ENCODE measurements at regions of chr14 and their contacts with region 1.

Region 1: DNA sequence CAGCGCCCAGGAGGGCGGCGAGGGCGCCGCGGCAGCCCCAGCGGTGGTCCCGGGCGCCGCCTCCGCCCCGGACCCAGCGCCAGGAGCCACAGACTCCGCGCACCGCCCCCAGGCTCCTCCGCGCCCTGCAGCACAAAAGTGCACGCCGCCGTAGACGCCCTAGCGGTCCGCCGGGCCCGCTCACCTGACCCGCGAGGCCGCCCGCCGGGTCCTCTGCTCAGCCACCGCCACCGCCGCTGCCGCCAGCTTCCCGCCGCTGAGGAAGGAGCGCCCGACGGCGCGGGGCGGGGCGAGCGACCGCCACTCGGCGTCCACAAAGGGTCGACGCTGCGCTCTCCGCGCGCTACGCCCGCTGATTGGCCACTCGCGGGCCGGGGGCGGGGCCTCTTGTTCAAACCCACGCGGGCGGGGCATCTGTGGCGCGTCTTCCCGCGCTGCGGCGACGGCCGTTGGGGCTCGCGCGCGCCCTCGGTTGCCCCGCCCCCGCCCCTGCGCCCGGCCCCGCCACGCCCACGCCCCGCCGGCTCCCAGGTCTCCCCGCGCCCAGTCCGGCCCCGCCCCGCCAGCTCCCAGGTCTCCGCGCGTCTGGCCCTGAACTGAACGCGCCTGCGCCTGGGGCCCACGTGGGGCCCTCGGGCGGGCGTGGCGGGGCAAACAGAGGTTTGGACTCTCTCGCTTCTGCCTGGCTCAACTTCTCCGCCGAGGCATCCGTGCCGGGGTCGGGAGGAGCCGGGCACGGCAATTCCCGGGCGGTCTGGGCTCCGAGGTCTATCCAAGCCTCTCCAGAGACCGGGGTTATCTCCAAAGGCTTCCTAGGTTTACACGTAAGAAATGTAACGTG is at the start of gene CDCA4:
- DNase-seq: peak; percentile 97
- H3K4me3 Mint-ChIP-seq: peak within 1 kb of the TSS; percentile 93
- H3K27ac Mint-ChIP-seq: peak within 1 kb of the TSS; percentile 81
- H3K4me1 Mint-ChIP-seq: peaks cover 60% of the 10 kb centered on the region
- H3K27me3 Mint-ChIP-seq: no peaks in the 10 kb centered on the region
- total RNA-seq, gene CDCA4: 47.7 and 49.6 TPM in 2 replicates

Region 2: GRCh38 chr14:104752735-104753531 is 268.1 kb before region 1 on chr14 and contains the start of gene SIVA1:
- intact Hi-C with region 1: loop called (anchors 10 kb)
- DNase-seq: peak; percentile 100
- H3K4me3 Mint-ChIP-seq: peak within 1 kb of the TSS; percentile 88
- H3K27ac Mint-ChIP-seq: peak within 1 kb of the TSS; percentile 89
- H3K4me1 Mint-ChIP-seq: peaks cover 22% of the 10 kb centered on the region
- H3K27me3 Mint-ChIP-seq: no peaks in the 10 kb centered on the region
- total RNA-seq, gene SIVA1: 96.0 and 104 TPM in 2 replicates

Region 3: GRCh38 chr14:104913435-104913834 is 107.6 kb before region 1 on chr14:
- intact Hi-C with region 1: no loop called
- DNase-seq: no peak
- H3K4me3 Mint-ChIP-seq: no peak overlapping the region
- H3K27ac Mint-ChIP-seq: no peak overlapping the region
- H3K4me1 Mint-ChIP-seq: no peaks in the 10 kb centered on the region
- H3K27me3 Mint-ChIP-seq: peaks cover 17% of the 10 kb centered on the region

Region 4: DNA sequence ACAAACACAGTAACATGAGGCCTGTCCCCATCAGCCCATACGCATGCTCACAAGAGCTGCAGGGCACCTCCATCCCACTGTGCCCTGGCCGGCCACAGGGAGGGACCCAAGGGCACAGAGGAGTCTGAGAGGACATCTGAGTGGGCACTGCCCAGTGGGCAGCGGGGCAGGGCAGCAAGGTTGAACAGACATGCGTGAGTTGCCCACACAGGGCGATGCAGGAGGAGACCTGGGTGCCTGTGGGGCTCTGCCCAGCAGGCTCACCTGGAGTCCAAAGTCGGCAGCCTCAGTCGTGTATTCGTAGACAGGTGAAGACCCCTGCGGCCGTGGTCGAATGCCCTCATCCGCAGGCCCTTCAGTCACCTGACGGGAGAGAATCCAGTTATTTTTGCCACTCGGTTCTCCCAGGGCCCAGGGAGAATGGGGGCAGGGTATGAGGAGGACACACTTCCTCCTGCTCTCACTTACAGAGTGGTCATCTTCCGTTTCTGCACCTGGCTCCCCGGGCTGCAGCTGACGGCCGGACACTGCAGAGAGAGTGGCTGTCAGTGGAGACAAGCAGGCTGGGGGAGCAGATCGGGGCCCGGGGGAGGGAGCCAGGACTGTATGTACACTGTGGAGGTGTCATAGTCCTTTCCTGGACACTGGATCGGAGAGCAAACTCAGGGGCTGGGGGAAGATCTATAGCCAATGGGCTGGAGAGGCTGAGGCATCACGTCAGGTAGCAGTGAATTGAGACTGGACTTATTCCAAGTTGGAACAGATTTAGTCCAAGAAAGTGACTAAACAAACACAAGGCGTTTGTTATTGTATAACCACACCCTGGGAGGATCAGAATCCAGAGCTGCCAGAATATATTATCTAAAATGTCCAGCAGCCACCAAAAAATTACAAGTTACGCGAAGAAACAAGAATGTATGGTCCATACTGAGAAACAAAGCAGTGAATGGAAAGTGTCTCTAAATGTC is 63.6 kb before region 1 on chr14:
- intact Hi-C with region 1: no loop called
- DNase-seq: no peak
- H3K4me3 Mint-ChIP-seq: no peak overlapping the region
- H3K27ac Mint-ChIP-seq: no peak overlapping the region
- H3K4me1 Mint-ChIP-seq: no peaks in the 10 kb centered on the region
- H3K27me3 Mint-ChIP-seq: peaks cover 12% of the 10 kb centered on the region

Region 5: GRCh38 chr14:104973300-104974145 is 47.5 kb before region 1 on chr14:
- intact Hi-C with region 1: no loop called
- DNase-seq: no peak
- H3K4me3 Mint-ChIP-seq: no peak overlapping the region
- H3K27ac Mint-ChIP-seq: no peak overlapping the region
- H3K4me1 Mint-ChIP-seq: peaks cover 5% of the 10 kb centered on the region
- H3K27me3 Mint-ChIP-seq: peaks cover 10% of the 10 kb centered on the region

Region 6: GRCh38 chr14:104985675-104986525 is 35.1 kb before region 1 on chr14 and contains the start of gene CLBA1:
- intact Hi-C with region 1: loop called (anchors 2 kb)
- DNase-seq: peak; percentile 86
- H3K4me3 Mint-ChIP-seq: peak within 1 kb of the TSS; percentile 61
- H3K27ac Mint-ChIP-seq: peak within 1 kb of the TSS; percentile 49
- H3K4me1 Mint-ChIP-seq: peaks cover 4% of the 10 kb centered on the region
- H3K27me3 Mint-ChIP-seq: peaks cover 3% of the 10 kb centered on the region
- total RNA-seq, gene CLBA1: 0.94 and 1.4 TPM in 2 replicates

Region 7: GRCh38 chr14:105045710-105046326 is 24.8 kb after region 1 on chr14:
- intact Hi-C with region 1: loop called (anchors 1 kb)
- DNase-seq: peak; percentile 86
- H3K4me3 Mint-ChIP-seq: no peak overlapping the region
- H3K27ac Mint-ChIP-seq: no peak overlapping the region
- H3K4me1 Mint-ChIP-seq: peaks cover 11% of the 10 kb centered on the region
- H3K27me3 Mint-ChIP-seq: no peaks in the 10 kb centered on the region

Region 8: DNA sequence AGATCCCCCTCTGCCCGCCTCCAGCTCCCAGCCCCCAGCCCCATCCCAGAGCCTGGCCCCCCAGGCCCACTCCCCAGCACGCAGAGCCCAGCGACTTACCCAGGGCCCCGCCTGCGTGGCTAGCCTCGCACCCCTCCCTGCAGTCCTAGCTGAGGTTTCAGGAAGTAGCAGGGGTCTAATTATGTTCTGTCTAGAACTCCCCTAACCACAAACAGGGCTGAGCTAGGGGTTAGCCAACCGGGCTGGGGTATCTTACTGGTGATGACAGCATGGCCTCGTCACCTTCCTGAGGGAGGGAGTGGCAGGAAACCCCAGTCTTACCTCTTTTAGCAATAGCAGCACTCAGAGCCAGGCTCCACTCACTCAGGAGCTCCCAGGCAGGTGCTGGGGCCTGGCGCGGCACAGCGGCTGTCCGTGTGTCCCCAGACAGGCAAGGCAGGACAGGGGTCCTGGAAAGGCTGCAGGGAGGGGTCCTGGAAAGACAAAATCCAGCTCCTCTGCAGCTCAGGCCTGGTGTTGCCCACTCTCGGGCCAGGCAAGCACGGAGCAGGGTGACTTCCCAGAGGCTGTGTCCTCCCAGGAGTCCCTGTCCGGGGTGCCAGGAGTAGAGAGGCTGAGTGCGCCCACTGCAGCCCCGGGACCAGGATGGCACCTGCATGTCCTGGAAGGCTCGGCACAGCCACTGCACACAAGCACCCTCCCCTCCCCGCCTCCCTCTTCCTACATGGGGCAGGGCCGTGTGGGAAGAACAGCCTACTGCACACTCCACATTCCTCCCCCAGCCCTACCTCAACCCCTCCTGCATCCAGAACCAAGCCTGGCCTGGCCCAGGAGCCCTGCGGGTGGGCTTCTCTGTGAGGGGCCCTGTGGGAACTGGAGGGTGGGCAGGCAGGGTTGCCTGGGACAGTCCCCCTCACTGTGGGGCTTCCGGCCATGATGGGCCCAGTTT is 44.5 kb after region 1 on chr14 and contains the start of gene GPR132:
- intact Hi-C with region 1: loop called (anchors 2 kb)
- DNase-seq: peak; percentile 88
- H3K4me3 Mint-ChIP-seq: peak within 1 kb of the TSS; percentile 87
- H3K27ac Mint-ChIP-seq: peak within 1 kb of the TSS; percentile 88
- H3K4me1 Mint-ChIP-seq: peaks cover 50% of the 10 kb centered on the region
- H3K27me3 Mint-ChIP-seq: no peaks in the 10 kb centered on the region
- total RNA-seq, gene GPR132: 27.1 and 29.8 TPM in 2 replicates

Region 9: DNA sequence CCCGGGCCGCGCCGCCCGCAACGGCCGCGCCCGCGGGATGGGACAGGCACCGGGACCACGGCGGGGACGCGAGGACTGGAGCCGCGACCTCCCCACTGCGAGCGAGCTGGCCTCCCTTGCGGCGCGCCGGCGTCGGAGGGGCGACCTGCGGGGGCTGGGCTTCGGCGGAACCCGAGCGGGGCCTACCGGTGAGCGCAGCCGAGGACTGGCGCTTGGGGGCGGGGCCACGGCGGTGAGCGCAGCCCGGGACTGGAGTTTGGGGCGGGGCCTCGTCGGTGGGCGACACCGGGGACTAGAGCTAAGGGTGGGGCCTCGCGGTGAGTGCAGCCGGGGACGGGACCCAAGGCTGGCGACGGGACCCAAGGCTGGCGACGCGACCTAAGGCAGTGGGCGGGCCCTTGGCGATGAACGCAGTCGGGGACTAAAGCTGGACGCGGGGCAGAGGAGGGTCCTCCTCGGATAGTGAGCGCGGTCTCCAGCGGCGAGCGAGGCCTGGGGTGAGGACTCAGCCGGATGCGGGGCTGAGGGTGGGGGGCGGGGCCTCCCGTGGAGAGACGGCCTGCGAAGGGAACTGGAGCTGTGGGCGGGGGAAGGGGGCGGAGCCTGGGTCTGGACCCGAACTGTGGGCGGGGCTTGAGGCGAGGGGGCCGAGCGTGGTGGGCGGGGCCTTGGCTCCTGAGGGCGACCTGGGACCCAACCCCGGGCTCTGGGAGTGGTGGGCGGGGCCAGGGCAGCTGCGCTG is 279.9 kb after region 1 on chr14 and contains the start of gene BRF1:
- intact Hi-C with region 1: loop called (anchors 1 kb)
- DNase-seq: peak; percentile 97
- H3K4me3 Mint-ChIP-seq: peak within 1 kb of the TSS; percentile 90
- H3K27ac Mint-ChIP-seq: peak within 1 kb of the TSS; percentile 92
- H3K4me1 Mint-ChIP-seq: peaks cover 25% of the 10 kb centered on the region
- H3K27me3 Mint-ChIP-seq: no peaks in the 10 kb centered on the region
- total RNA-seq, gene BRF1: 44.0 TPM in 2 replicates

Region 10: DNA sequence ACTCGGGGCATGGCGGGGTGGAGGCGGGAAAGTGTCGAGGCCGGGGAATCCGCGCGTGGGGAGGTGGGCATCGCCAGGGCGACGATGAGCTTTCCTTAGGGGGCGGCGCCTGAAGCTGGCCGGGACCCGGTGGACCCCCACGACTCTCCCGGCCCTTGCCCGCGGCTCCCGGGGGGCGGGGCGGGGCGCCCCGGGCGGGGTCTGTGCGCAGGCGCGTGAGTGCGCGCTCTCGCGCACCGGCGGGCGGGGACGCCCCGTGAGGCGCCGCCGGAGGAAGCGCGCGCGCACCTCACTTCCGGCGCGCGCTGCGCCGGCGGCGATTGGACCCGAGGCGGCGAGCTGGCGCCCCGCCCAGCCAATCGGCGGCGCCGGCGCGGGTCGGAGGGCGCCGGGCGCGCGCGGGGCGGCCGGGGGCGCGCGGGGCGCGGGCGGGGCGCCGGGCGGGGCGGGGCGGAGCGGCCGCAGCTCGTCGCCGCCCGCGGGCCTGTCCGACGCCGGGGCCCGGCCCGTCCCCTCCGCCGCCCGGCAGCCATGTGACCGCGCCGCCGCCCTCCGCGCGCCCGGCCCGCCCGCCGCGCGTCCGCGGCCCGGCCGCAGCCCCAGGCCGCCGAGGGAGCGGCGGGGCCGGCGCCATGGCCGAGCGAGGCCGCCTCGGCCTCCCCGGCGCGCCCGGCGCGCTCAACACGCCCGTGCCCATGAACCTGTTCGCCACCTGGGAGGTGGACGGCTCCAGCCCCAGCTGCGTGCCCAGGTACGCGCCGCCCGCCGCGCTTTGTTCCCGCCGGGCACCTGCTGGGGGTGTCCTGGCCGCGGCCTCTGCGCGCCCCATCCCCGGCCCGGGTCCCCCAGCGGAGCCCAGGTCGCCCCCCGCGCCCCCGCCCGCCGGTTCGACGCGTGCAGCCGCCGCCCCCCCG is 293.5 kb after region 1 on chr14 and contains the start of gene PACS2:
- intact Hi-C with region 1: loop called (anchors 2 kb)
- DNase-seq: peak; percentile 73
- H3K4me3 Mint-ChIP-seq: peak within 1 kb of the TSS; percentile 88
- H3K27ac Mint-ChIP-seq: peak within 1 kb of the TSS; percentile 80
- H3K4me1 Mint-ChIP-seq: peaks cover 19% of the 10 kb centered on the region
- H3K27me3 Mint-ChIP-seq: no peaks in the 10 kb centered on the region
- total RNA-seq, gene PACS2: 35.2 and 36.8 TPM in 2 replicates

Measured in activated T-helper 2 cell treated with anti-CD3 and anti-CD28 coated beads, Interferon-gamma antibody, Interleukin-2, Interleukin-4, amounts not matched to agents 10 μg/mL and 5 μg/mL and 100 μg/mL, durations not matched to agents 14 hours and 24 hours and 36 hours (primary cell).